ENCODE measurements at regions of chr12 and their contacts with region 1.

Region 1: DNA sequence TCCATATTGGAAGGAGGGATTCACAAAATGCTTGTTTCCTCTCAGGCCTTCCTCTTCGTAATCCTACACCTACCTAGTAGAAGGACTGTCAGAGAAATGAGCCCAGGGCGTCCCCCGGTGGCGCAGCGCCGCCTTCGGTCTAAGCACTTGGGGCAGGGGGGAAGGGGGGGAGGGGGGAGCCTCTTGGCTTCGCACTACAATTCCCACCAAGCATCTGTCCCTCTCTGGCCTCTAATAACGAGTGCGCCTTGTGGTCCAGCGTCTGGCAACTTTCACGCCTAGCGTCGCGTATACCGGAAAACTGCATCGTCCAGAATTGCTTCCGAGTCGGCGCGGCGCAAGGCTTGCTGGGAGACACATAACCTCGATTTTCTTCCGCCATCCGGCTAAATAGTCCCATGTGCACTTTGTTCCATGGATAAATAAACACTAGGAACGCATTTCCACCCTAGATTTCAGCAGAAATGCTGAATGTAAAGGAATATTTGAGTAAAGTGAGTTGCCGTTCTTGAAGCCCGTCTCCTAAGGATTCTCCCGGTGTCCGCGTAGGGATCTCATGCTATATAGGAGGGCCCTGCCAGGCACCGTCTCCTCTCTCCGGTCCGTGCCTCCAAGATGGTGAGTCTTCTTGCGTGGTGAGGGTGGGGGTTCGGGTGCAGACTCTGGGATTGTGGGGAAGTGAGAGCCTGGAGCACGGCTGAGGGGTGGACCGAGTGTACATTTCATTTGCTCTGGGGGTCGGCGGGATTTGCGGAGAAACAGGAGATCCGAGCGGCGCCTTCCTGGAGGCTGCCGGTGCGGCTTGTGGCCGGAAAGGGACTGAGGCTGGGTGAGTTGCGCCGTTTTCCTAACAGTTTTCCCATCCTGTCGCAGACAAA is at the start of gene RPS26:
- DNase-seq: peak; percentile 77
- ATAC-seq: peak; percentile 93
- H3K4me3 Mint-ChIP-seq: peak within 1 kb of the TSS; percentile 99
- H3K27ac Mint-ChIP-seq: peak within 1 kb of the TSS; percentile 98
- H3K4me1 Mint-ChIP-seq: peaks cover 33% of the 10 kb centered on the region
- H3K27me3 Mint-ChIP-seq: no peaks in the 10 kb centered on the region
- CTCF ChIP-seq: no peak
- total RNA-seq, gene RPS26: 23.9 and 28.1 TPM in 2 replicates

Region 2: DNA sequence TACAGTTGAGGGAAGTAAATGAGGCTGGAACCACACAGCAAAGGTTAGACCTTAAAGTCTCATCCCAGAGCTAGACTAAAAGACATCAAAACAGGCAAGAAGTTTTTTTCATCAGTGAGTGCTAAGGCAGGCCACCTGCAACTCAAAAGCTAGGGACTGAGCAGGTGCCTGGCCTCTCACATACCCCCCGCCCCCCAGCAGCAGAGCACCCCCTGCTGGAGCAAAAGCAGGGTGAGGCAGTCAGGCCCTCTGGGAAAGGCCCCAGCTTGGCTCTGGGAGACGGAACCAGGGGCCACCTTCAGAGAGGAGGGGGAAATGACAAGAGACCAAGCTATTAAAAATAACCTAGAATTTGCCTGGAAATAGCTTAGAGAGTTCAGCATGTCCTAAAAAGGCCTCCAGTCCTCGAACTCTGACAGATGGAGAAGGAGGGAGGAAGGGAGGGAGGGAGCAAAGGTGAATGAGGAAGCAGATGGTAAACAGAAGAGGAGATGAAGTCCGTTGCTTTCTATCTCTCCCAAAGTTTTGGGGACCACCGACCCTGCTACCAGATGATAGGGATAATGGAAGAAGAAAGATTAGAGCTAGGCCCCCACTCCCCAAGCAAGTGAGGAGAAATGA is 335.9 kb before region 1 on chr12:
- CTCF ChIA-PET with region 1: no interaction called
- POLR2A ChIA-PET with region 1: no interaction called
- intact Hi-C with region 1: no loop called
- DNase-seq: no peak
- ATAC-seq: no peak
- H3K4me3 Mint-ChIP-seq: peak overlapping the region; percentile 11
- H3K27ac Mint-ChIP-seq: no peak overlapping the region
- H3K4me1 Mint-ChIP-seq: peaks cover 23% of the 10 kb centered on the region
- H3K27me3 Mint-ChIP-seq: peaks cover 4% of the 10 kb centered on the region
- CTCF ChIP-seq: no peak

Region 3: DNA sequence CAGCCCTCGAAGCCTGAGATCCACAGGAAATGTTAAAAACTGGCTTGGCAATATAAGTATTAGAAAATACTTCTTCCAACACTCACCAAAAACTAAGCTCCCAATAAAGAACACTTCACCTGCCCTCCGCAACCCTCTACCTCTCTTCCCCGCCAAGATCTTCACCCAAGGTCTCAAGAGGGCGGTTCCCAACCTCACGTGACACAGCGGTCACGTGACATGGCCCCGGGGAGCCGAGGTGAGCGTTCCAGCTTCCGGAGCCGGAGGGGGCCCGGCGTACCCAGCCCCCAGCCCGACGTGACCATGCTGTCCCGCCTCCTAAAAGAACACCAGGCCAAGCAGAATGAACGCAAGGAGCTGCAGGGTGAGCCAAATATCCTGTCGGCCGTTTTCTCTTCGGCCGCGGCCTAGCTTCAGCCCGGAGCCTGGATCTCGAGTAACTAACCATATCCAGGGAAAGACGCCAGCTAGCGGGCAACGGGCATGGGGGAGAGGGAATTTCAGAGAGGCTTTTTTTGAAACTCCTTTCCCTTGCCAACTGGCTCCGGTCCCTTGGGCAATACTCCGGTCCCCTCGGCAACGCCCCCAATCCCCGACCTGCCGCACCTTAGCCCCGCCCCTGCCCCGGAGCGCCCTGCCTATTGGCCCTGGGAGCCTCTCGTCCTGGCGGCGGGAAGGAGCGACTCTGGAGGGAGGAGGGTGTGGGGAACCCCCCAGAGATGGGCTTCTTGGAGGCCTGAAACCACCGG is 325.8 kb before region 1 on chr12 and contains the start of gene BLOC1S1:
- CTCF ChIA-PET with region 1: no interaction called
- POLR2A ChIA-PET with region 1: no interaction called
- intact Hi-C with region 1: loop called (anchors 1 kb)
- DNase-seq: peak; percentile 92
- ATAC-seq: peak; percentile 94
- H3K4me3 Mint-ChIP-seq: peak within 1 kb of the TSS; percentile 92
- H3K27ac Mint-ChIP-seq: peak within 1 kb of the TSS; percentile 91
- H3K4me1 Mint-ChIP-seq: peaks cover 34% of the 10 kb centered on the region
- H3K27me3 Mint-ChIP-seq: peaks cover 2% of the 10 kb centered on the region
- CTCF ChIP-seq: no peak
- total RNA-seq, gene BLOC1S1: 91.0 and 104 TPM in 2 replicates

Region 4: DNA sequence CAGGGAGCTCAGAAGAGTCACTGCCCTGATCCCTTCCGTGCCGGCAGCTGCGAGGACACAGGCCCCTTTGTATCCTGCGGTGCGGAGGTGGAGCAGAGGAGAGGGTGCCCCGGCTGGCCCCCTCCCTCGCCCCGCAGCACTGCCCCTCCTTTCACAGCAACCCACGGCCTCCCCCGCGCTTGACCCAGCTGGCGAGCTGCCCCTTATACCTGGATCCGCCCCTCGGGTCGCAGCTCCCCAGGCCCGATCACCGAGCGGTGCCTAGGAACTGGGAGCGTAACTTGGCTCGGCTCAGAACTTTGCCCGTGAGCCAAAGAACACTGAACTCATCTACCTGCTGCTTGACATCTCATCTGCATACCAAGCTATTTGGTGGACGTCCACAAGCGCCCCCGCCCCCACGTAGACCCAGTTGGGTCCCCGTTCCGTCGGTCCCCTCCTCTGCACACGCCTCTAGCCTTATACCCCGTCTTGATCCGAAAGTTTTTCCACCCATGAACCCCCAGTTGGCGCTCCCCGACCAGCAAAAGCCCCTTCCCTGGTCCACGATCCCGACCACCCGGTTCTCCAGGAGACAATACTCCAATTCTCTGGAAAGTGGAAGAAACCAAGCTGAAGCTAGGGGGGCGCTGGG is 211.7 kb before region 1 on chr12:
- CTCF ChIA-PET with region 1: no interaction called
- POLR2A ChIA-PET with region 1: interaction called, 3 read pairs
- intact Hi-C with region 1: loop called (anchors 1 kb)
- DNase-seq: peak; percentile 32
- ATAC-seq: peak; percentile 13
- H3K4me3 Mint-ChIP-seq: peak overlapping the region; percentile 97
- H3K27ac Mint-ChIP-seq: peak overlapping the region; percentile 91
- H3K4me1 Mint-ChIP-seq: peaks cover 51% of the 10 kb centered on the region
- H3K27me3 Mint-ChIP-seq: no peaks in the 10 kb centered on the region
- CTCF ChIP-seq: no peak

Region 5: DNA sequence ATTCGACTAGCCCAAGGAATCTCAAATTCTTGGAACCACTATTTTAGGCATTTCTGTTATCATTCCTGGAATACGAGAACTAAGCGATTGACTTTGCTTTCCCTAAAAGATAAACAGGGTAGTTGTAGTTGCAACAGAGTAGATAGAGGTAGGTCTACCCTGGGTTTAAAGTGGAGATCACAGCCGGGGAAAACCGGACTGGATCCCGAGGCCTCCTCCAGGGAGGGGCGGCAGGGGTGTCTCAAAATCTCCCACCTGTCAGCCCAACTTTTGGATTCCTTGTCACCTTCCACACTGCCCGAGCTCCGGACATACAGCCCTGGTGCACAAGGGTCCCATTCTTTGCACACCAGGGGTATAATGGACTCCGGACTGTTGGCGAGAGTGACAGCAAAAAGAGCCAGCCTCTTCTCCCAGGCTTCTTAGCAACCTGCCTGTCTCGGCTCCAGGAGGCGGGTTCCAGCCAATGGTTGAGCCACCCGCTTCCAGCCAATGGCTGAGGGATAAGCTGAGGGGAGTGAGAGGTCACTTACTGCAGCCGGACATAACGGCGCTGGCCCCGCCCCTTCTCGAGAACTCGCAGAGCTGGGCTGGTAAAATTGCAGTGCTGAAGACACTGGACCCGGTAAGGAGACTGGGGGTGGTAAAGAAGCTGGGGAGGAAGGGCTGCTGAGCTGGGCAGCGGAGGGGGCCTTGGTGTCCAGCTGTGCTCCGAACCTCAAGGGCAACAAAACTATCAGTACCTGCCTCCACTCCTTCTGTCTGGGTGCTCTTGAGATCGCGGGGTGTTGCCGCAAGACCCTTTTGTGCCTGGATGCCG is 44.9 kb before region 1 on chr12 and contains the start of gene SUOX:
- CTCF ChIA-PET with region 1: interaction called, 9 read pairs
- POLR2A ChIA-PET with region 1: no interaction called
- intact Hi-C with region 1: loop called (anchors 1 kb)
- DNase-seq: no peak
- ATAC-seq: peak; percentile 75
- H3K4me3 Mint-ChIP-seq: peak within 1 kb of the TSS; percentile 78
- H3K27ac Mint-ChIP-seq: peak within 1 kb of the TSS; percentile 18
- H3K4me1 Mint-ChIP-seq: peaks cover 21% of the 10 kb centered on the region
- H3K27me3 Mint-ChIP-seq: no peaks in the 10 kb centered on the region
- CTCF ChIP-seq: no peak
- total RNA-seq, gene SUOX: 5.4 and 5.6 TPM in 2 replicates

Region 6: DNA sequence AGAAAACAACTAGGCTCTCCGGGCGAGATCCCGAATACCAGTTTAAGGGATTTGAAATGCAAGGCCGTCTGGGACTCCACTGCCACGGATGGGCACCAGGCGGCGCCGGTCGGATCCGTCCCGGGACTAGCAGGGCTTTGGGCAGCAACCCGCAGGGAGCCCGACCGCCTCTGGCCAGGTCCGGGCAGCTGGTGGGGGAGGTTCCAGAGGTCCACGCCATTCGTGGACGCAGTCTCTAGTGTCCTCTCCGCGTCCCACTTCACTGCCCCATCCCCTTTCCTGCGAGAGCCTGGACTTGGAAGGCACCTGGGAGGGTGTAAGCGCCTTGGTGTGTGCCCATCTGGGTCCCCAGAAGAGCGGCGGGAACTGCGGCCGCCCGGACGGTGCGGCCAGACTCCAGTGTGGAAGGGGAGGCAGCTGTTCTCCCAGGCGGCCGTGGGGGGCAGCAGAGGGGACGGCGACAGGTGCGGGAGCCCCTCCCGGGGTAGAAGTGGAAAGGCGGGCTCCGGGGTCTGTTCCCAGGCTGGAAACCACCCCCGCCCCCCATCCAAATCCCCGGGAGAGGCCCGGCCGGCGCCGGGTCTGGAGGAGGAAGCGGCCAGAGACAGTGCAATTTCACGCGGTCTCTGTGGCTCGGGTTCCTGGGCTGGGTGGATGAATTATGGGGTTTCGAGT is 37.3 kb after region 1 on chr12:
- CTCF ChIA-PET with region 1: no interaction called
- POLR2A ChIA-PET with region 1: no interaction called
- intact Hi-C with region 1: loop called (anchors 1 kb)
- DNase-seq: peak; percentile 52
- ATAC-seq: peak; percentile 82
- H3K4me3 Mint-ChIP-seq: peak overlapping the region; percentile 88
- H3K27ac Mint-ChIP-seq: no peak overlapping the region
- H3K4me1 Mint-ChIP-seq: peaks cover 10% of the 10 kb centered on the region
- H3K27me3 Mint-ChIP-seq: peaks cover 22% of the 10 kb centered on the region
- CTCF ChIP-seq: no peak

Measured in activated B cell treated with CpG ODN at 0.5 μM for 24 hours (primary cell).